ENCODE measurements at regions of chr16 and their contacts with region 1.

Region 1: GRCh38 chr16:58551496-58551895 is 36.2 kb downstream of the SETD6 start:
- DNase-seq: no peak
- ATAC-seq: no peak
- H3K4me3 Mint-ChIP-seq: no peak overlapping the region
- H3K27ac Mint-ChIP-seq: no peak overlapping the region
- H3K4me1 Mint-ChIP-seq: no peaks in the 10 kb centered on the region
- H3K27me3 Mint-ChIP-seq: no peaks in the 10 kb centered on the region
- CTCF ChIP-seq: no peak

Region 2: DNA sequence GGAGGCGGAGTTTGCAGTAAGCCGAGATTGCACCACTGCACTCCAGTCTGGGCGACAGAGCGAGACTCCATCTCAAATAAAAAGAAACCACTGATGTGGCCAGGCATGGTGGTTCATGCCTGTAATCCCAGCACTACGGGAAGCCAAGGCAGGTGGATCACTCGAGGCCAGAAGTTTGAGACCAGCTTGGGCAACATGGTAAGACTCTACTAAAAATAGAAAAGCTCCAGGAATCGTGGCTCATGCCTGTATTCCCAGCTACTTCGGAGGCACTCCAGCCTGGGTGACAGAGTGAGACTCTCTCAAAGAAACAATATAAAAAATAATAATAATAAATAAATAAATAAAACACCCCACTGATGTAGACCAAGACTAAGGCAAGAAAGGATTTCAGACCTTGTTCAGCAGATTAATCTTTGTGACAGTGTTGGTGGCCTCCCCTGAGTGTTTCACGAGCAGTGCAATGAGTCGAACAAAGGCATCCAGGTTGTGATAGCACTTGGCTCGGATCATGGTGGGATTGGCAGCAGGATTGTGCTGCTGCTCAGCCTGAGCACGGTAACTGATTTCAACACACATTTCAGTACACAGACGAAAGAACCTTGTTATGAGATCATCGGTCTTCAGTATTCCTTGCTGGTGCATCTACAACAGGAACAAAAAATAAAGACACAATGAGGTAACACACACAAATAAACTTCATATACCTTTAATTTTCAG is 17.6 kb before region 1 on chr16:
- CTCF ChIA-PET with region 1: no interaction called
- POLR2A ChIA-PET with region 1: no interaction called
- intact Hi-C with region 1: loop called (anchors 2 kb)
- DNase-seq: no peak
- ATAC-seq: no peak
- H3K4me3 Mint-ChIP-seq: no peak overlapping the region
- H3K27ac Mint-ChIP-seq: no peak overlapping the region
- H3K4me1 Mint-ChIP-seq: no peaks in the 10 kb centered on the region
- H3K27me3 Mint-ChIP-seq: no peaks in the 10 kb centered on the region
- CTCF ChIP-seq: no peak

Region 3: DNA sequence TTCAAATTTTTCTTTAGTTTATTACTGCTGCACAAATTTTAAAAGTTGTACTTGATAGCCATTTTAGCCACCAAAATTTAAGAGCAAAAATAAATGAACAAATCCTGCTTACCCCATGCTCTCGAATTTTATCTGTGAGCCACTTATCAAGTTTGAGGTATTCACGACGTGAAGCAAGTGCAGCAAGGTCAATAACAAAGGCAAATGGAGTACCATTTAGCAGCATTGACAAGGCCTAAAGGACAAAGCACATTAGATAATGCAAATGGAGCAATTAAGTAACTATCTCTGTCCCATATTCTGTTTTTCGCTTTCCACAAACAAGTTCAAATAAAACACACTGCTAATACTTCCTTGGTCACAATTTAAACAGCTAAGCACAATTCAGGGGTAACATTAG is 23.4 kb after region 1 on chr16:
- CTCF ChIA-PET with region 1: no interaction called
- POLR2A ChIA-PET with region 1: interaction called, 3 read pairs
- intact Hi-C with region 1: loop called (anchors 2 kb)
- DNase-seq: no peak
- ATAC-seq: no peak
- H3K4me3 Mint-ChIP-seq: no peak overlapping the region
- H3K27ac Mint-ChIP-seq: no peak overlapping the region
- H3K4me1 Mint-ChIP-seq: no peaks in the 10 kb centered on the region
- H3K27me3 Mint-ChIP-seq: no peaks in the 10 kb centered on the region
- CTCF ChIP-seq: no peak

Region 4: DNA sequence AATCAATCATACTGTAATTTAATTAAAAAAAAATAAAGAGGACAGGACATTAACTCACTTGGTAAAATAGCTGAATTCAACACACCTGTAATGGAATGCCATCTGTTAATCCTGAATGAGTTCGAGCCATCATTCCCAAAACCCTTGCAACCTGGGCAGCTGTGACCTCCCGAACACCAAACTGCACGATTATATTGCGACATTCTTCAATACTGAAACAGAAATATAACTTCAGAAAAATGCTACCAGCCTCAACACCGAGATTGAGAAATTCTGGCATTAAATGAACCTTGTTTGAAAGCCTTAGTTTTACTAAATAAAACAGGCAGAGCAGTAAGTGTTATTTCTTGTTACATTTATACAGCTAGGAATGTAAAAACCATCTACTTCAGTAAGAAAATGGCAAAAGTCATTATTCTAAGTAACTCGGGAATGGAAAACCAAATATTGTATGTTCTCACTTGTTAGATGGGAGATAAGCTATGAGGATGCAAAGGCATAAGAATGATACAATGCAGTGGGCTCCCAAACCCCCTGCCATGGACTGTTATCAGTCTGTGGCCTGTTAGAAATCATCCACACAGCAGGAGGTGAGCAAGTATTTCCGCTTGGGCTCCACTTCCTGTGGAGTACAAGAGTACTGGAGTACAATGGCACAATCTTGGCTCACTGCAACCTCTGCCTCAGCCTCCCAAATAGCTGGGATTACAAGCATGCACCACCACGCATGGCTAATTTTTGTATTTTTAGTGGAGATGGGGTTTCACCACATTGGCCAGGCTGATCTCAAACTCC is 31.7 kb after region 1 on chr16:
- CTCF ChIA-PET with region 1: no interaction called
- POLR2A ChIA-PET with region 1: no interaction called
- intact Hi-C with region 1: loop called (anchors 5 kb)
- DNase-seq: no peak
- ATAC-seq: no peak
- H3K4me3 Mint-ChIP-seq: no peak overlapping the region
- H3K27ac Mint-ChIP-seq: no peak overlapping the region
- H3K4me1 Mint-ChIP-seq: no peaks in the 10 kb centered on the region
- H3K27me3 Mint-ChIP-seq: no peaks in the 10 kb centered on the region
- CTCF ChIP-seq: no peak